ENCODE measurements at regions of chr12 and their contacts with region 1.

Region 1: DNA sequence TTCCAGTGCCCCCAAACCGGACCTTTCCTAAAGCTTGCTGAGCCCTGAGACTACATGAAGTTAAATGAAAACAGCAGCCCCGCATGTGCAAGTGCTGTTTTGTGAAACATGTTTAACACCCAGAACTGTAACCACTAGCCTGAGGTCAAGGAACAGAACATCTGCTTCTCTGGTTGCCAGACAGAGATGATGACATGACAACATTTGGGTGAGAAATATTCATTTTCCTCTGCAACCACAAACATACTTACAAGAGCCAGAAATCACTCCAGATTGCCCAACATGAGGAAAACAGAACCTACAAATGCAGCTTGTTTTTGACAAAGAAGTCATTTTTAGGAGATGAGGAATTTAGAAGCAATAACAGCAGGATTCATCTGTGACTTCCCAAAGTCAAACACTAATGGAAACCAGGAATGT is 110.4 kb downstream of the BCAT1 start:
- DNase-seq: peak; percentile 84
- ATAC-seq: peak; percentile 72
- H3K4me3 ChIP-seq: peak overlapping the region; percentile 8; the same call in 1 of the 2 replicates
- H3K27ac ChIP-seq: peak overlapping the region; percentile 89
- H3K4me1 ChIP-seq: peaks cover 27% of the 10 kb centered on the region
- H3K27me3 ChIP-seq: no peaks in the 10 kb centered on the region
- CTCF ChIP-seq: no peak
- EP300 ChIP-seq: peak; percentile 87 to 89; a peak in 3 of 4 replicates
- POLR2A ChIP-seq: no peak
- RAD21 ChIP-seq: 0 out of 2 replicates have a peak, but pooled peaks have one; percentile 3

Region 2: DNA sequence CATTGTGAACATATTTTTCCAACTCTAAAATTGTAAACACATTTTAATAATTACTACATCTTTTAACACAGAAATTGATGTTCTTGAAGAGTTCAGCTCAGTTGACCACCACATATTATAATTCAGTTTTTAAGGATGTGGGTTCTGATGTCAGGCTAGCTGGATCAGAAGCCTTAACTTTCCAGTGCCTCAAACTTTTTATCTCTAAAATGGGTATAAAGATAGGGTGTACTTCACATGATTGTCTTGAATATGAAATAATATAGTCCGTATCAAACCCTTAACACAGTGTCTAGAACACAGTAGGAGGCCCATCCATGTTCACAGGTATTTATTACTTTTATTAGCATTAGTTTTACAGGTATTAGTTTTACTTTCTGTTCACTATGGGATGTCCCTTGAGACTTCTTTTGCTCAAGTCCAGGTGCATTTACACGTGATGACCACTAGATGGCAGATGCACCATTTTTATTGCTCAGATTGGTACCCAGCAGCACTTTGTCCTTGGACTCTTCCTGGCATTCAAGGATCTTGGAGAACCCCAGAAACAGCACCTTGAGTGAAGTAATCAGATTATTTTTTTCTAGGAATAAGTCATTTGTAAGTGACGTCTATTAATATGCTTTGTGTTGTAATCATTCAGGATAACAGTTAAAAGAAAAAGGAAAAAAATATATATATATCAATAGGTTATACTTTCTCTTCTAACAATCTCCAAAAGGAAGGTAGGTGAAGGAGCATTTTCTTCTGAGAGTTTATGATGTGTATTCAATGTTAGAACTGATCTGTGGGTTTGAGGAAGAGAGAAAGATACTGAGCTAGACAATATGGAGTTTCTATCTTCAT is 1633.4 kb before region 1 on chr12:
- CTCF ChIA-PET with region 1: interaction called, 3 read pairs
- POLR2A ChIA-PET with region 1: no interaction called
- RAD21 ChIA-PET with region 1: no interaction called
- SMC1A ChIA-PET with region 1: interaction called, 3 read pairs
- in situ Hi-C with region 1: loop called (anchors 10 kb)
- intact Hi-C with region 1: no loop called
- DNase-seq: peak; percentile 27
- ATAC-seq: peak; percentile 93
- H3K4me3 ChIP-seq: no peak overlapping the region
- H3K27ac ChIP-seq: no peak overlapping the region
- H3K4me1 ChIP-seq: no peaks in the 10 kb centered on the region
- H3K27me3 ChIP-seq: no peaks in the 10 kb centered on the region
- CTCF ChIP-seq: peak; percentile 83 to 90 (median 90)
- EP300 ChIP-seq: no peak
- POLR2A ChIP-seq: no peak
- RAD21 ChIP-seq: peak; percentile 81

Region 3: DNA sequence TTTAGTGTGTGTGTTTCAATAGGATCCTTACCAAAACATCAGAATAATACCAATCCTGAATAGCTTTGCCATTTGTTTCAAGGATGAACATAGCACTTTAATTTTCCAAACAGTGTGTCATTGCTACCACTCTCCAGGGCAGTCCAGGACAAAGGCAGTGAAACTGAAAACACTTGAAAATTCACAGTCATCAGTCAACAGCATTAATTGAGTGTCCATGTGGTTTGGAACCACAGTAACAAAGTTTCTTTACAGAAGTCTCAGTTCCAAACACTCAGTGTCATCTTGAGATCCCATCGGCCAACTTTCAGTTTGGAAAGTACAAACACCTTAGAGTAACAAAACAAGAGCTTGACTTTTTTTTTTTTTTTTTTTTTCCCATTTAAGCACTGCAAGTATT is 660.7 kb before region 1 on chr12:
- CTCF ChIA-PET with region 1: no interaction called
- POLR2A ChIA-PET with region 1: no interaction called
- RAD21 ChIA-PET with region 1: no interaction called
- SMC1A ChIA-PET with region 1: no interaction called
- in situ Hi-C with region 1: no loop called
- intact Hi-C with region 1: loop called (anchors 5 kb)
- DNase-seq: peak; percentile 73
- ATAC-seq: peak; percentile 91
- H3K4me3 ChIP-seq: no peak overlapping the region
- H3K27ac ChIP-seq: no peak overlapping the region
- H3K4me1 ChIP-seq: peaks cover 6% of the 10 kb centered on the region
- H3K27me3 ChIP-seq: no peaks in the 10 kb centered on the region
- CTCF ChIP-seq: no peak
- EP300 ChIP-seq: peak; percentile 64 to 78; a peak in 3 of 4 replicates
- POLR2A ChIP-seq: no peak
- RAD21 ChIP-seq: no peak

Region 4: DNA sequence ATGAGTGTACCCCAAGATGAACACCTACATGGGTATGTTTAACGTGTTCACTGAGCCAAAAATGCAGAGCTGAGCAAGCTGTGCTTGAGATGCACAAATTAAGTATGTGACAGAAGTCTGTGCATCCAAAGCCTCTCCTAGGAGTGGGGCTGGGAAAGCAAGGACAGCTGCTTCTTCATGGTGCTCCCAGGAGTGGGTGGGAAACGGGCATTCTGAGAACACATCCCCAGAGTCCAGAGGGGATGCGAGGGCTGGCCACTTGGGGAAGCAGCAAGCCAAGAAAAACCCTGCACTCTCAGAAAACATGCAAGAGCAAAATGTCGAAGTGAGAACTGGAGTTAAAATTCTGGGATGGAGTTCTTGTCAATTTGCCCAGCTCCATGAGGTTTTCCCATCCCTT is 303.9 kb before region 1 on chr12:
- CTCF ChIA-PET with region 1: no interaction called
- POLR2A ChIA-PET with region 1: no interaction called
- RAD21 ChIA-PET with region 1: no interaction called
- SMC1A ChIA-PET with region 1: no interaction called
- in situ Hi-C with region 1: no loop called
- intact Hi-C with region 1: no loop called
- DNase-seq: no peak
- ATAC-seq: no peak
- H3K4me3 ChIP-seq: no peak overlapping the region
- H3K27ac ChIP-seq: no peak overlapping the region
- H3K4me1 ChIP-seq: no peaks in the 10 kb centered on the region
- H3K27me3 ChIP-seq: no peaks in the 10 kb centered on the region; a peak in 1 of 4 replicates
- CTCF ChIP-seq: no peak
- EP300 ChIP-seq: no peak
- POLR2A ChIP-seq: no peak
- RAD21 ChIP-seq: no peak

Region 5: DNA sequence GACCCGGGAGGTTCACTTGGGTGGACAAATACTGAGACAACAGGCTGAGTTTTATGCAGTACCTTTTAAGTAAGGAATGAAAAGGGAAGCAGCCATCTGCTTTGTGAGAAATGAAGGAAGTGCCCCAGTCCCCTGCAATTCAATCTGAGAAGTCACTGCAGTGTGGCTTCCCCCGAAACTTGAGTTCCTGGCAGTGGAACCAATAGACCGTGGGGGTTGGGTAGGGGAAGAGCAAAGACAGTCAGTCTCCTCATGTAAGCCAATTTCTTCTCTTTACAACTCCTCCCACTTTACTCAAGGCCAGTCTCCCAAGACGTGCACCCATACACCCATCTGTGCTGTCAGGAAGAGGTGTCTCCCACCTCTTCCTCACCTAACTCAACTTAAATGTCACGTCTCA is 96.2 kb before region 1 on chr12:
- CTCF ChIA-PET with region 1: no interaction called
- POLR2A ChIA-PET with region 1: no interaction called
- RAD21 ChIA-PET with region 1: interaction called, 4 read pairs
- SMC1A ChIA-PET with region 1: no interaction called
- in situ Hi-C with region 1: no loop called
- intact Hi-C with region 1: loop called (anchors 2 kb)
- DNase-seq: peak; percentile 45
- ATAC-seq: peak; percentile 83
- H3K4me3 ChIP-seq: no peak overlapping the region
- H3K27ac ChIP-seq: no peak overlapping the region
- H3K4me1 ChIP-seq: peaks cover 22% of the 10 kb centered on the region
- H3K27me3 ChIP-seq: no peaks in the 10 kb centered on the region; a peak in 1 of 4 replicates
- CTCF ChIP-seq: no peak
- EP300 ChIP-seq: no peak
- POLR2A ChIP-seq: no peak
- RAD21 ChIP-seq: no peak

Region 6: DNA sequence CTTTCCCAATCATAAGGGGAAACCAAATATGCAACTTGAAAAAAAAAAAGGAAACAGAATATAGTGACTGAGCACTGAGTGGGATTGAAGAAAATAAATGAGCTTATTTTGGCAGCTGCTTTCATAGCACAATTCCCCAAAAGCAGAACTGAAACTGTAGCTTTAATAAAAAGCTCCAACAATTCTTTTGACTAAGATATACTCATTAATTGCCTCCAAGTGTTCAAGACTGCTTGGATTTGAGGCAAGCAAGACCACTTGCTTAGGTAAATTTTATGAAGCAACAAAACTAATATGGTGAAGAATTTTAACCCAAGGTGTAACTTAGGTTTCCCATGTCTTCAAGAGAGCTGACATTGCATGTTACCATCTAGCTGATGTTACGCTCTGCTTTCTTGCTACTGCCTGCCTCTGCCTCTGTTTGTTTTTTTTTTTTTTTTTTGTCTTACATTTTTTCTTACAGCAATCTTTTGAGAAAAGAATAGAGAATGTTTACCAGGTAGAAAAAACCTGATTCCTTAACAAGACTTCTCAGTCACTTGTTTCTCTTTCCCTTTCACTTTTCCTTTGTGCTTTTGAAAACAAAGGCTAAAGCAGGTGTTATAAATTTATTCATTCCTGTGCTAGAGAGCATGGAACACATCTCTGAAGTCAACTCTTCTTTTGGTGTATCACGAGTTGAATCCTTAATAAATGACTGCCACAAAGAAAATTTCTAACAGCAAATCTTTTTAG is 24.0 kb before region 1 on chr12:
- CTCF ChIA-PET with region 1: interaction called, 9 read pairs
- POLR2A ChIA-PET with region 1: interaction called, 9 read pairs
- RAD21 ChIA-PET with region 1: interaction called, 29 read pairs
- SMC1A ChIA-PET with region 1: interaction called, 26 read pairs
- in situ Hi-C with region 1: no loop called
- intact Hi-C with region 1: no loop called
- DNase-seq: peak; percentile 63
- ATAC-seq: peak; percentile 94
- H3K4me3 ChIP-seq: peak overlapping the region; percentile 46; the same call in 1 of the 2 replicates
- H3K27ac ChIP-seq: peak overlapping the region; percentile 63
- H3K4me1 ChIP-seq: peaks cover 17% of the 10 kb centered on the region
- H3K27me3 ChIP-seq: no peaks in the 10 kb centered on the region
- CTCF ChIP-seq: no peak
- EP300 ChIP-seq: peak; percentile 74 to 91; a peak in 3 of 4 replicates
- POLR2A ChIP-seq: no peak
- RAD21 ChIP-seq: no peak

Region 7: GRCh38 chr12:24948757-24949722 is 110.5 kb after region 1 on chr12 and contains the start of gene BCAT1:
- CTCF ChIA-PET with region 1: interaction called, 6 read pairs
- POLR2A ChIA-PET with region 1: interaction called, 11 read pairs
- RAD21 ChIA-PET with region 1: interaction called, 10 read pairs
- SMC1A ChIA-PET with region 1: interaction called, 61 read pairs
- in situ Hi-C with region 1: loop called (anchors 5 kb)
- intact Hi-C with region 1: loop called (anchors 1 kb)
- DNase-seq: no peak
- ATAC-seq: peak; percentile 41
- H3K4me3 ChIP-seq: peak within 1 kb of the TSS; percentile 85
- H3K27ac ChIP-seq: peak within 1 kb of the TSS; percentile 97
- H3K4me1 ChIP-seq: peaks cover 52% of the 10 kb centered on the region
- H3K27me3 ChIP-seq: no peaks in the 10 kb centered on the region
- CTCF ChIP-seq: peak in 2 of 3 experiments; percentile 7 to 11; a peak in 1 of 6 replicates
- EP300 ChIP-seq: no peak
- POLR2A ChIP-seq: peak; percentile 88
- RAD21 ChIP-seq: no peak
- polyA plus RNA-seq, gene BCAT1: 26.2 to 38.1 TPM

Region 8: GRCh38 chr12:25052196-25052913 is 213.8 kb after region 1 on chr12:
- CTCF ChIA-PET with region 1: interaction called, 3 read pairs
- POLR2A ChIA-PET with region 1: no interaction called
- RAD21 ChIA-PET with region 1: interaction called, 3 read pairs
- SMC1A ChIA-PET with region 1: interaction called, 3 read pairs
- in situ Hi-C with region 1: no loop called
- intact Hi-C with region 1: loop called (anchors 5 kb)
- DNase-seq: peak; percentile 93
- ATAC-seq: peak; percentile 79
- H3K4me3 ChIP-seq: peak overlapping the region; percentile 83
- H3K27ac ChIP-seq: peak overlapping the region; percentile 92
- H3K4me1 ChIP-seq: peaks cover 14% of the 10 kb centered on the region; the same call in 1 of the 2 replicates
- H3K27me3 ChIP-seq: no peaks in the 10 kb centered on the region
- CTCF ChIP-seq: no peak
- EP300 ChIP-seq: peak in 1 of 2 experiments; percentile 72; a peak in 2 of 4 replicates
- POLR2A ChIP-seq: peak; percentile 72
- RAD21 ChIP-seq: no peak

Measured in GM12878 (cell line).